ENCODE measurements at regions of chr3 and their contacts with region 1.

Region 1: DNA sequence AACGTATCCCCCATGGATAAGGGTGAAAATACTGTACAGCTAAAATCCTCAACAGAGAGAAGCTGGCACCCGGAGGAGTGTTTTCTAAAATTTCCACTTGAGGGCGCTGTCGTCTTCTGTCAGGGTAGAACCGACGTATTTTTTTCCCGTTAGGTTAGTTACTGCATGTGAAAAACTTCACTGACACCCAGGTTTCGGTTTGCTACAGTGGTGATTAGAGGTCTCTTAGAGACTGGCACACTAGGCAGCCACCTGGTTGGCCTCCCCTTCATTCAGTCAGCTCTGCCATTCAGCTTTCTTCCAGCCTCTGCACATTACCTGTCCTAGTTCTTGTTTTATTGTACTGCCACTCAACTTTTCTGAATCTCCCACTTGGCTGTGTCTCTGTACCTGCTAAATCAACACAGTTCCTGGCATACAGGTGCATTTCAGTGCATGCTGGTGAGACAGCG is 18.4 kb downstream of the CCK start:
- DNase-seq: peak; percentile 49
- ATAC-seq: peak; percentile 77
- H3K4me3 ChIP-seq: 0 out of 2 replicates have a peak overlapping the region, but pooled peaks have one; percentile 12
- H3K27ac ChIP-seq: no peak overlapping the region
- H3K4me1 ChIP-seq: no peaks in the 10 kb centered on the region
- H3K27me3 ChIP-seq: peaks cover 33% of the 10 kb centered on the region
- CTCF ChIP-seq: peak; percentile 81
- POLR2A ChIP-seq: no peak
- RAD21 ChIP-seq: peak; percentile 81

Region 2: GRCh38 chr3:42443819-42444436 is 196.3 kb after region 1 on chr3:
- CTCF ChIA-PET with region 1: interaction called, 13 read pairs
- POLR2A ChIA-PET with region 1: no interaction called
- dilution Hi-C with region 1: no loop called
- in situ Hi-C with region 1: loop called (anchors 5 kb)
- intact Hi-C with region 1: loop called (anchors 1 kb)
- DNase-seq: peak; percentile 59
- ATAC-seq: peak; percentile 100
- H3K4me3 ChIP-seq: no peak overlapping the region
- H3K27ac ChIP-seq: no peak overlapping the region
- H3K4me1 ChIP-seq: no peaks in the 10 kb centered on the region
- H3K27me3 ChIP-seq: peaks cover 11% of the 10 kb centered on the region
- CTCF ChIP-seq: peak; percentile 95
- POLR2A ChIP-seq: no peak
- RAD21 ChIP-seq: peak; percentile 92

Region 3: GRCh38 chr3:42547401-42547945 is 299.9 kb after region 1 on chr3:
- CTCF ChIA-PET with region 1: interaction called, 3 read pairs
- POLR2A ChIA-PET with region 1: no interaction called
- dilution Hi-C with region 1: no loop called
- in situ Hi-C with region 1: no loop called
- intact Hi-C with region 1: loop called (anchors 5 kb)
- DNase-seq: peak; percentile 44
- ATAC-seq: peak; percentile 81
- H3K4me3 ChIP-seq: no peak overlapping the region
- H3K27ac ChIP-seq: no peak overlapping the region
- H3K4me1 ChIP-seq: no peaks in the 10 kb centered on the region; the same call in 1 of the 2 replicates
- H3K27me3 ChIP-seq: no peaks in the 10 kb centered on the region
- CTCF ChIP-seq: peak; percentile 74
- POLR2A ChIP-seq: no peak
- RAD21 ChIP-seq: peak; percentile 45

Region 4: GRCh38 chr3:42839616-42840015 is 592.0 kb after region 1 on chr3:
- CTCF ChIA-PET with region 1: no interaction called
- POLR2A ChIA-PET with region 1: no interaction called
- dilution Hi-C with region 1: no loop called
- in situ Hi-C with region 1: no loop called
- intact Hi-C with region 1: loop called (anchors 5 kb)
- DNase-seq: peak; percentile 71
- ATAC-seq: peak; percentile 100
- H3K4me3 ChIP-seq: no peak overlapping the region
- H3K27ac ChIP-seq: no peak overlapping the region
- H3K4me1 ChIP-seq: no peaks in the 10 kb centered on the region
- H3K27me3 ChIP-seq: peaks cover 39% of the 10 kb centered on the region
- CTCF ChIP-seq: peak; percentile 78
- POLR2A ChIP-seq: no peak
- RAD21 ChIP-seq: peak; percentile 62

Region 5: GRCh38 chr3:42880601-42881451 is 633.2 kb after region 1 on chr3:
- CTCF ChIA-PET with region 1: no interaction called
- POLR2A ChIA-PET with region 1: no interaction called
- dilution Hi-C with region 1: no loop called
- in situ Hi-C with region 1: no loop called
- intact Hi-C with region 1: loop called (anchors 5 kb)
- DNase-seq: peak; percentile 61
- ATAC-seq: peak; percentile 99
- H3K4me3 ChIP-seq: peak overlapping the region; percentile 48
- H3K27ac ChIP-seq: no peak overlapping the region; the same call in 1 of the 2 replicates
- H3K4me1 ChIP-seq: no peaks in the 10 kb centered on the region
- H3K27me3 ChIP-seq: peaks cover 13% of the 10 kb centered on the region
- CTCF ChIP-seq: peak; percentile 81
- POLR2A ChIP-seq: 0 out of 2 replicates have a peak, but pooled peaks have one; percentile 28
- RAD21 ChIP-seq: peak; percentile 80